ENCODE measurements at regions of chr20 and their contacts with region 1.

Region 1: DNA sequence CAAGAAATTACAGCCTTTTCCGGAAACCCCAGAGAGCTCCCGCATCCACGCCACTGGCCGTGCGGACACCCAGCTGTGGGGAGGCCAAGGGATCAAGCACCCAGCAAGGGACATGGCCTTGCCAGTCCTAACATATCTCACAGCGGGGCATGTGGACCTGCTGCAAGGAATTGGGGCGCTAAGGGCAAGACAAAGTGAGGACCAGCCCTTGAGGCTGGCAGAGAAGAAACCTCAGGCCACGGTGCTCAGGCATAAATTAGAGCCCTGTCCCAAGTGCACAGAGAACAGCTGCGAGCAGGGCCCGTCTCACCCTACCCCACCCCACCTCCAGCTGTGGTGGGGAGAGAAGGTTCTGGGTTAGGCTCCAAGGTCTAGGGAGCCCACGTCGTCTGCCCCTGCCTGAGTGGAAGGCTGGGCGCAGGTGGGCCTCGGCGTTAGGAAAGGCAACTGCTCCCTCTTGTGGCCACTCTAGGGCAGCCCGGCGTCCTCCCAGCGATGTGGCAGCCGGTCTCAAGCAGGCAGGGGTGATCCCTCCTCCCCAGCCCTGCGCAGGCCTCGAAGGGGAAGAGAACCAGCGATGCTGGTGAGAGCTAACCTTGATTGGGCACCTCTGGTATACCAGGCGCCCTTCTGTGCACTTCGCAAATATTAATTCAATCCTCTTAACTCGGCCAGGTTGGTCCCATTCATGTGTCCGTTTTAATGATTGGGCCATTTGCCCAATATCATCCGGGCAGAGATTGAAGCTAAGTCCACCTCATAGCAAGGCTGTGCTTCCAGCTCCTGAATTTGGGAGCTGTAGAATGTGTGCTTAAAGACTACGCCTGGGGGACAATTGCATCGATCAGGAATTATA is 235.8 kb downstream of the NFATC2 start:
- DNase-seq: peak; percentile 71
- H3K4me3 Mint-ChIP-seq: no peak overlapping the region
- H3K27ac Mint-ChIP-seq: no peak overlapping the region
- H3K4me1 Mint-ChIP-seq: peaks cover 2% of the 10 kb centered on the region
- H3K27me3 Mint-ChIP-seq: peaks cover 23% of the 10 kb centered on the region

Region 2: DNA sequence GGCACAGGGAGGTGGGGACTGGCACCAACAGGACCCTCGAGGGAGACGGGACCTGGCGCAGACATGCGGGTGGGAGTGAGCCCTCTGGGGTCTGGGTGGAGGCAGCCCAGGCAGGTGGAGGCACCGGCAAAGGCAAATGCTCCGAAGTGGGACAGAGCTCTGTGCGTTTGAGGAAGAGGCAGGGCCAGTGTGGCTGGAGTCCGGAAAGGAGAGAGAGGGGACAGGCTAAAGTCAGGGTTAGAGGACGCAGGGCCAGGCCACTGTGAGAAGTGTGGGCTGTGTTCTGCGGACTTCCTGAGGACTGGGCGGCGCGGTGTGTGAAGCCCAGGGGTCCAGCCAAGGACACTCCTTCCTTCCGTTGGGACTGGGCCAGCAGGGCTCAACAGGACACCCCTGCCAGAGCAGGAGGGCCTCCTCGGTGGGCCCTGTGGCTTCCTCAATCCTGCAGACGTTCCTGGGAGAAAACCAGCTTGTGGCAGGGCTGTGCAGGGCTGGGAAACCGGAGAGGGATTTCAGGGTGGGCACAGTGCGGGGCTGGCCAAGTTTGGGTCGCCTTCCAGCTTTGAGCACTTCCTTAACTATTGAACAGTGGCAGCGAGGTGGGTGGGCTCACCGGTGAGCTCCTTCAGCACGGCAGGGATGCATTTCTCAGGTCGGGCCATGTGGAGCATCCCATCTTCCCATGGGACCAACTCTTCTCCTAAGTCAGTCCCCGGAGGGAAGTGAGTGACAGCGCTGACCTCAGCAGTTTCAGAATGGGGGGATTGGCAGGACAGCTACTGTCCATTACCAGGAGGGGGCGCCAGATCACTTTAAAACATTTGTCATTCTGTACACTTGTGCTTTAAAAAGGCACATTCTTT is 325.6 kb before region 1 on chr20:
- CTCF ChIA-PET with region 1: interaction called, 64 read pairs
- POLR2A ChIA-PET with region 1: no interaction called
- DNase-seq: peak; percentile 66
- H3K4me3 Mint-ChIP-seq: no peak overlapping the region
- H3K27ac Mint-ChIP-seq: no peak overlapping the region
- H3K4me1 Mint-ChIP-seq: peaks cover 8% of the 10 kb centered on the region
- H3K27me3 Mint-ChIP-seq: peaks cover 22% of the 10 kb centered on the region

Region 3: GRCh38 chr20:50987592-50988210 is 319.0 kb before region 1 on chr20:
- CTCF ChIA-PET with region 1: interaction called, 64 read pairs
- POLR2A ChIA-PET with region 1: interaction called, 3 read pairs
- DNase-seq: peak; percentile 54
- H3K4me3 Mint-ChIP-seq: no peak overlapping the region
- H3K27ac Mint-ChIP-seq: no peak overlapping the region
- H3K4me1 Mint-ChIP-seq: peaks cover 2% of the 10 kb centered on the region
- H3K27me3 Mint-ChIP-seq: peaks cover 27% of the 10 kb centered on the region

Region 4: DNA sequence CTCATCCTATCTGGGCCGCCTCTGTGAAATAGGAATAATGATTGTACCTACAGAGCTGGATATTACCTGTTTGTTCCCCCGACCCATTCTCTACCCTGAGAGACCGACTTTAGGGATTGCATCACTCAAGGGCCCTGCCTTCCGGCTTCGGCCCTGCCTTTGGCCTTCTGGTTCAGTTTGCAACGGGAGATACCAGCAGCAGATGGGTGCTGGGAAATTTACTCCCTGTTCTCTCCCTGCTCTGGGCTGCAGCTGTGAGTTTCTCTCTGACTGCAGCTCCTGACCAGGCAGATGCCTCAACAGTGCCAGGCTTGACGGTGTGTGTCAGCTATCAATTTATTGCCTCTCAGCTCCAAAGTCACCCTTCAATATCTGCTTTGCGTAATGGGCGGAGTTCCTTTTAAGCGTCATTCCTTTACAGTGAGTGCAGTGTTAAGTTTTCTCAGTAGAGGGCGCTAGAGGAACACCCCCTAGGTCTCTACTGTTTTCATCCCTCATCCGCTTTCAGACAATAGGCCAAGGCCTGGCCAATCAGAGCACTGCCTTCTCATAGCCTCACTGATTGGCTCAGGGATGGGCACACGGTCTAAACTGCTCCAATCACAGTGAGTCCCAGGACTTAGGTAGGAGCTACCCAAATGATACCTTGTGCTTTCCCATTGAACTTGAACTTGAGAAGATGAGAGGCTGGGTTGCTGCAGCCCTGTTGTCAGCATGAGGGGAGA is 313.8 kb before region 1 on chr20:
- CTCF ChIA-PET with region 1: interaction called, 64 read pairs
- POLR2A ChIA-PET with region 1: interaction called, 3 read pairs
- DNase-seq: peak; percentile 51
- H3K4me3 Mint-ChIP-seq: no peak overlapping the region
- H3K27ac Mint-ChIP-seq: no peak overlapping the region
- H3K4me1 Mint-ChIP-seq: no peaks in the 10 kb centered on the region
- H3K27me3 Mint-ChIP-seq: peaks cover 4% of the 10 kb centered on the region

Region 5: GRCh38 chr20:51258582-51259180 is 48.0 kb before region 1 on chr20:
- CTCF ChIA-PET with region 1: no interaction called
- POLR2A ChIA-PET with region 1: no interaction called
- DNase-seq: no peak
- H3K4me3 Mint-ChIP-seq: no peak overlapping the region
- H3K27ac Mint-ChIP-seq: no peak overlapping the region
- H3K4me1 Mint-ChIP-seq: peaks cover 6% of the 10 kb centered on the region
- H3K27me3 Mint-ChIP-seq: peaks cover 26% of the 10 kb centered on the region